Caco-2 (cell line): ENCODE measurements at regions of chr16 and their contacts with region 1.

Region 1: DNA sequence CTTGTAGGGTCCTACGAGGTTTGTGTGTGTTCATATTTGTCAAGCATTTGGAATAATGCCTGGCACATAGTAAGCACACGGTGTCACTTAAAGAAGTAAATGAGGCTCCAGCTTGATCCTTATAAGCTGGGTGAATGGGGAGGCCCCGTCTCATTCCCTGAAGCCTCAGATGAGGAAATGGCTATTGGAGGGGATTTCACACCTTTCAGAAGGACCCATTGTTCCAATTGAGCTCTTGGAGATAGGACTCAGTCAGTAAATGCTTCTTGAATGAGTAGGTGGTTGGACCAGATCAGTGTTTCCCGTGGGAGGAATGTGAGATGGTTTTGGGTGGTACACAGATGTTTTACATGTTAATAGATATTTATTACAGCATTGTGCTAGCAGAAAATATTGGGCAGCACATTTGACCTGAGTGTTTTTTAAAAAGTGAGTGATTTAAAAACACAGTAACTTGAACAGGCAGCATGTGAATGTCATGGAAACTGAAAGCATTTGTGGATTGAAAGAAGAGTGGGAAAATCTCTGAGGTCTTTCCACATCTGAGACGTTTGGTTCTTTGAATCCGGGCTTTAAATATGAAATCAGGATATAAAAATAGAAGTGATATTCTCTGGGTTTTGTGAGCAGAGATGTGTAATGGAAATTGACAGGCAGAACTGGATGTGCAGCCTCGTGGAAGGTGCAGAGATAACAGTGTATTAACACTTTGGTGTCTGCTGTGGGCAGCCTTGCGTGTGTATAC is 36.4 kb upstream of the ARHGAP17 start:
- DNase-seq: no peak
- H3K4me3 ChIP-seq: no peak overlapping the region
- H3K4me3 Mint-ChIP-seq: peak overlapping the region; percentile 52
- H3K27ac Mint-ChIP-seq: peak overlapping the region; percentile 43
- H3K4me1 ChIP-seq: peaks cover 33% of the 10 kb centered on the region
- H3K4me1 Mint-ChIP-seq: peaks cover 20% of the 10 kb centered on the region
- H3K27me3 ChIP-seq: no peaks in the 10 kb centered on the region
- H3K27me3 Mint-ChIP-seq: no peaks in the 10 kb centered on the region
- CTCF ChIP-seq: no peak

Region 2: DNA sequence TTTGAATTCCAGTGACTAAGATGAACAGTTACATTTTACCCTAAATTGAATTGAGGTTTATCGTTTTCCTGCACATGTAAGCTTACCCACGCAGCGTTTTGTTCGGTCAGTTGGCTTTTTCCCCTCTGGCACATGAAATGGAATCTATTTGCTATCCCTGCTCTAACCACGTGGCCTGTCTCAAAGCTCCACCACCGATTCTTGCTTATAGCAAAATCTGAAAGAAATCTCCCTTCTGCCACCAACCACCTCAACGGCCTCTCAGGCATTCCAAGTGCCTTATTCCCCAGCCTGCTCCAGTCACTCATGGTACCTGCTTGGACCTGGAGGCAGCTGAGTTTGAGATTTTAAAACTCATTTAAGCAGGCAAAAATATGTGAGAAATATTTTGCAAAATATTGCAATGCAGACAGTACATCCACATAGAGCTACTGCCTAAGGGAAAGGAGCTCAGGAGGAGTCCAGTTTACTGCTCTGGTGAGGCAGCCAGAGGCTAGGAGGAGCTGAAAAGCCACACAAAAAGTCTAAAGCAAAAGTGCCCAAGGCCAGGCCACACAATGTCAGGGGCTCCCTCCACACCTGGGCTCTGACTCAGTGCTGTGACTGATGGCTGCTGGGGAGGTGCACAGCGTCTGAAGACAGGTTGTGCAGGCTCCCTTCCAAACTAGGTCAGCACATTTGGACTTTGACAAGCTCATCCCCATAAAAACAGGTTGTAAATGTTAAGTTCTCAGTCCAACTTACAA is 62.8 kb before region 1 on chr16:
- CTCF ChIA-PET with region 1: no interaction called
- POLR2A ChIA-PET with region 1: interaction called, 3 read pairs
- intact Hi-C with region 1: loop called (anchors 2 kb)
- DNase-seq: peak; percentile 87 to 91
- H3K4me3 ChIP-seq: no peak overlapping the region
- H3K4me3 Mint-ChIP-seq: peak overlapping the region; percentile 49
- H3K27ac Mint-ChIP-seq: peak overlapping the region; percentile 86
- H3K4me1 ChIP-seq: peaks cover 67% of the 10 kb centered on the region
- H3K4me1 Mint-ChIP-seq: peaks cover 51% of the 10 kb centered on the region
- H3K27me3 ChIP-seq: no peaks in the 10 kb centered on the region
- H3K27me3 Mint-ChIP-seq: no peaks in the 10 kb centered on the region
- CTCF ChIP-seq: no peak

Region 3: GRCh38 chr16:25031441-25032307 is 19.9 kb before region 1 on chr16:
- CTCF ChIA-PET with region 1: no interaction called
- POLR2A ChIA-PET with region 1: interaction called, 5 read pairs
- intact Hi-C with region 1: loop called (anchors 2 kb)
- DNase-seq: peak; percentile 92 to 94
- H3K4me3 ChIP-seq: peak overlapping the region; percentile 62
- H3K4me3 Mint-ChIP-seq: peak overlapping the region; percentile 98
- H3K27ac Mint-ChIP-seq: peak overlapping the region; percentile 81
- H3K4me1 ChIP-seq: peaks cover 26% of the 10 kb centered on the region
- H3K4me1 Mint-ChIP-seq: peaks cover 34% of the 10 kb centered on the region
- H3K27me3 ChIP-seq: no peaks in the 10 kb centered on the region
- H3K27me3 Mint-ChIP-seq: no peaks in the 10 kb centered on the region
- CTCF ChIP-seq: peak in 1 of 2 experiments; percentile 1

Region 4: DNA sequence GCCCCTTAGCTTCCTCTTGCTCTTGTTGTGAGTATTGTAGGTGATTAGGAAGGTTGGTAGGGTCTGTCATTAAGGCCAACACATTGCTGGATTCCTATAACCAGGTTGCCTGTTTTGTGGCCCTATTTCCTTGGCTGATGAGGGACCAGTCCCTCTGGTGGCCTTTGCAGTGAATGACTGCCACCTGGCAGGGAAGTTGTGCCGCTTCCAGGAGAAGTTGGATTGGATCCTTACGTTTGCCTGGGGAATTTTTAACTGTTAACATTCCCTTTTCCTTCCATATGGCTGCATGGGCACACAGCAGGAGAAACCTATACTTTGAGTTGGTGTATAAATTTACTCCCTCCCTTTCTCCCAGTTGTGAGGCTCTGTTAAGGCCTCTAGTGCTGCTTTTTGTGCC is 92.3 kb after region 1 on chr16:
- CTCF ChIA-PET with region 1: no interaction called
- POLR2A ChIA-PET with region 1: no interaction called
- intact Hi-C with region 1: loop called (anchors 1 kb)
- DNase-seq: peak in 1 of 2 experiments; percentile 30
- H3K4me3 ChIP-seq: no peak overlapping the region
- H3K4me3 Mint-ChIP-seq: no peak overlapping the region
- H3K27ac Mint-ChIP-seq: no peak overlapping the region
- H3K4me1 ChIP-seq: no peaks in the 10 kb centered on the region
- H3K4me1 Mint-ChIP-seq: peaks cover 15% of the 10 kb centered on the region
- H3K27me3 ChIP-seq: no peaks in the 10 kb centered on the region
- H3K27me3 Mint-ChIP-seq: no peaks in the 10 kb centered on the region
- CTCF ChIP-seq: peak; percentile 45 to 54

Region 5: DNA sequence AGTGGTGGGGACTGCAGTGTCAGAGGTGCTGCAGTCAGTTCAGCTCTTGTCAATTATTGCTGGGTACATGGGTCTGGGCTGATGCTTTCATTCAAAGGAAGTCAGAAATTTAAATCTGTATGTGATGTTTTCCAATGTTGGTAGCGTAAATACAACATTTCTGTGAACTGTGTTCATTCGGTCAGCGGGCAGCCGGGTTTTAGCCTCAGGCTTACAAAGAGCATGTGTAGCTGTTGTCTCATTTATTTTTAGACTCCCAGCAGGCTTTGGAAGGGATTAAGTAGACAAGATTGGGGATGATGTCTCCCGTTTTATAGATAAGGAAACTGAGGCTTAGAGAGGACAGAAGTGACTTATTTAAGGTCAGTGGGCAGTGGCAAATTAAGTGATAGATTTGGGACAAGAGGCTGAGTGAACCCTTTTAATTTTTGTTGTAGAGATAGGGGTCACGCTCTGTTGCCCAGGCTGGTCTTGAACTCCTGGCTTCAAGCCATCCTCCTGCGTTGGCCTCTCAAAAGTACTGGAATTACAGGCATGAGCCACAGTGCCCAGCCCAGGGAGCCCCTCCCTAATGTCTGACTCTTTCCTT is 173.2 kb after region 1 on chr16:
- CTCF ChIA-PET with region 1: interaction called, 6 read pairs
- POLR2A ChIA-PET with region 1: no interaction called
- intact Hi-C with region 1: loop called (anchors 1 kb)
- DNase-seq: no peak
- H3K4me3 ChIP-seq: no peak overlapping the region
- H3K4me3 Mint-ChIP-seq: no peak overlapping the region
- H3K27ac Mint-ChIP-seq: no peak overlapping the region
- H3K4me1 ChIP-seq: no peaks in the 10 kb centered on the region
- H3K4me1 Mint-ChIP-seq: no peaks in the 10 kb centered on the region
- H3K27me3 ChIP-seq: no peaks in the 10 kb centered on the region
- H3K27me3 Mint-ChIP-seq: no peaks in the 10 kb centered on the region
- CTCF ChIP-seq: no peak